ENCODE measurements at regions of chr22 and their contacts with region 1.

Region 1: DNA sequence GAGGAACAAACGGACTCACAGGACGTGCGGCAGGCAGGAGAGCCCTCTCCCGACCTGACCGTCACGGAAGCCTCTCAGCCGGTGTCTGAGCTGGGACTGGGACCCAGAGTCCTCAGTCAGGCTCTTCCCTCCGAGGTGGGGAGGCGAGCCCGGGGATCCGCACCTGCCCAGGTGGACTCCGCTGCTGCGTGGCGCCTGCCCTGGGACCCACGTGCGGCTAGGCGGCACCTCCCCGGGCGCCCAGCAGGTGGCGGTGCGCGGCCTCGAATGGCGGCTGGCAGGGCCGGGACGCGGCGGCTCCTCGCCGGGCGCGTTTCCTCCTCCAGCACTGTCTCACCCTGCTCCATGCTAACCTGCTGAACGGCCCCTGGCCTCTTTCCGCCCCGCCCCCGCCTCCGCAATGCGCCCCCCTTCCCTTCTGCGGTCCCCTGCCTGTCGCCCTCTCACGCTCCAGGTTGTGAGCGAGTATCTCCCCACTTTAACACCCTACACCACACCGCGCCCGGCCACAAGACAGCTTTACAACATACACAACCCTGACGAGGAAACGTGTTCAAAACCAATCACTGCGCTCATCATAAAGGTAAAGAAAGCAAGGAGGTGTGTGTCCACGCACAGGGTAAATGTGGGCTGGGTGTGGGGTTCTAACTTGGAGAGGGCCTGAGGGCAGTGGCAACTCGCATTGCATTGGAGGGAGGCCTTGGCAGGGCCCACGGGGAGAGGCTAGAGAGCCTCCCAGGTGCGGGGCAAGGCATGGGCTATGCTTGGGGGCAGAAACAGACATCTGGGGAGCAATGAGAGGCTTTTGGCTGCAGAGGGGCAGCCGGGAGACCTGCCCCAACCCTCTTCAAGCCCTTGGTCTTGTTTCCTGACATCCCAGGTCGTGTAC is 25.9 kb upstream of the ATXN10 start:
- DNase-seq: no peak
- H3K4me3 ChIP-seq: peak overlapping the region in 2 of 4 donors; percentile 15 to 48
- H3K27ac ChIP-seq: no peak overlapping the region
- H3K4me1 ChIP-seq: peaks cover 10 to 25% (median 11%) of the 10 kb centered on the region in 3 donors
- H3K27me3 ChIP-seq: peaks cover 0 to 35% (median 2%) of the 10 kb centered on the region in 4 donors
- CTCF ChIP-seq: peak; percentile 86 to 98 (median 96)
- POLR2A ChIP-seq: no peak

Region 2: GRCh38 chr22:45308391-45309186 is 337.2 kb before region 1 on chr22:
- intact Hi-C with region 1: no loop called
- DNase-seq: no peak
- H3K4me3 ChIP-seq: peak overlapping the region in 3 of 4 donors; percentile 78 to 100 (median 94)
- H3K27ac ChIP-seq: peak overlapping the region; percentile 86 to 95 (median 90)
- H3K4me1 ChIP-seq: peaks cover 12 to 46% (median 21%) of the 10 kb centered on the region in 3 donors
- H3K27me3 ChIP-seq: no peaks in the 10 kb centered on the region
- CTCF ChIP-seq: no peak
- POLR2A ChIP-seq: no peak

Region 3: GRCh38 chr22:45511847-45512281 is 133.9 kb before region 1 on chr22:
- intact Hi-C with region 1: no loop called
- DNase-seq: no peak
- H3K4me3 ChIP-seq: no peak overlapping the region
- H3K27ac ChIP-seq: peak overlapping the region; percentile 62 to 90 (median 86)
- H3K4me1 ChIP-seq: peaks cover 9 to 98% (median 36%) of the 10 kb centered on the region in 3 donors
- H3K27me3 ChIP-seq: no peaks in the 10 kb centered on the region
- CTCF ChIP-seq: no peak
- POLR2A ChIP-seq: no peak

Region 4: DNA sequence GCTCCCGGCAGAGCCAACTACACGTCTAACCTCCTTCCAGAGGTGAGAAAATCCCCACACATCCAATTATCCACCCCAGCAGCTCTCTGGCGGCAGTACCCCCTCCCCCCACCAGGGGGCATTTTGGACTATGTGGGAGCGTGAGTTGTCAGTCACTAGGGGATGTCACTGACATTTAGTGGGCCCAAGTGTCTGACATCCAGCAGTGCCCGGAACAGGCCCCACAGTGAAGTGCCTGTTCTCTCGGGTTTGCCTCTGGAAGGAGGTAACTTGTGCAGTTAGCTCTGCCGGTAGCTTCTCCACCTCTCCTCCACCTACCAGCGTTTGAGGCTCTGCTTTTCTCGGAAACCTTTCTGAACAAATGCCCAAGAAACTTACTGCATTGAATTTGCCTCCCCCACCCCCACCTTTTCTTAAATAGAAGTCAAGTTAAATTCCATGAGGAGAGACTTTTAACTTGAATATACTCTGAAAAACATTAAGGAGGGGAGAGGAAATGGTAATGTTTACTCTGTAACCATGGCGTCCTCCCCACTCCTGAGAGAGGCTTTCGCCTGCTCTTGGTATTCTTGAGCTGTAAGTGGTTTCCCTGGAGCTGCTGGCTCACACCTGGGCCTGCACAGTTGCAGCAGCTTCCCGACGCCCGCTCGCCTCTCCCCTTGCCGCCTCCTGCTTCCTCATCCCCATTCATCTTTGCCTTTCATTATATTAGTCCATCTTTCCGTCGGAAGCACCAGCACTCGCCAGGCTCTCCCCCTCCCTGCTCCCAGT is 218.4 kb after region 1 on chr22:
- intact Hi-C with region 1: loop called (anchors 10 kb)
- DNase-seq: no peak
- H3K4me3 ChIP-seq: no peak overlapping the region
- H3K27ac ChIP-seq: peak overlapping the region in 2 of 4 donors; percentile 4 to 42
- H3K4me1 ChIP-seq: peaks cover 37 to 53% (median 41%) of the 10 kb centered on the region in 3 donors
- H3K27me3 ChIP-seq: peaks cover 0 to 46% (median 0%) of the 10 kb centered on the region in 4 donors
- CTCF ChIP-seq: peak; percentile 83 to 94 (median 93)
- POLR2A ChIP-seq: no peak

Measured in esophagus squamous epithelium (tissue), 5 donors.